Body of pancreas (tissue), 4 donors: ENCODE measurements at regions of chr9 and their contacts with region 1.

Region 1: GRCh38 chr9:78261403-78262001 is 25.6 kb downstream of the CEP78 start:
- DNase-seq: no peak
- ATAC-seq: peak; percentile 50
- H3K4me3 ChIP-seq: no peak overlapping the region
- H3K27ac ChIP-seq: no peak overlapping the region
- H3K4me1 ChIP-seq: peaks cover 17% of the 10 kb centered on the region
- H3K27me3 ChIP-seq: no peaks in the 10 kb centered on the region
- CTCF ChIP-seq: peak; percentile 20 to 74 (median 66)
- POLR2A ChIP-seq: no peak

Region 2: DNA sequence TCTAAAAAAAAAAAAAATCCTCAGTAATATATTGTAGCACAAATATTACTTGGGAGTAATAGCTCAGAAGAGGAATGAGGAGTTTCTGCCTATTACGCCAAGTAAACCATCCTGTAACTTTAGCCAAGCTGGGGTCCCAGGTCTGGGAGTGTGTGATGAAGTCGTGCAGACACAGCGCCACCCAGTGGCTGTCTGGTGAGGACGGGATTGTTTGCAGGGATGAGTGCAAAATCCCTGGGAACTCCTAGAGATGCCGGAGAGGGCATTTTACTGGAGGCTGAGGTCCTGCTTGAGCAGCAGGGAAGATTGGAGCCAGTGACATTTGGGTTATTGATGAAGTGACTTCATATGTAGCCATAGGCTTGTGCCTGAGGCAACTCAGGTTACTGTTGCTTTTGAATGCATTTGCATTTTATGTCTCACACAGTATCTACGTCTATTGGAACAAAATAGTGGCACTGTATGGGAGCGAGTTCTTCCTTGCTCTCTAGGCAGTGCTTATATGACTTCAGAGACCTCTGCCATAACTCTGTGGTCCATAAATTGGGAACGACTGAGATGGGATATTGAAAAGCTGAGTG is 108.2 kb after region 1 on chr9:
- intact Hi-C with region 1: loop called (anchors 10 kb)
- DNase-seq: peak; percentile 71 to 81 (median 76)
- ATAC-seq: peak; percentile 35
- H3K4me3 ChIP-seq: no peak overlapping the region
- H3K27ac ChIP-seq: no peak overlapping the region
- H3K4me1 ChIP-seq: no peaks in the 10 kb centered on the region
- H3K27me3 ChIP-seq: no peaks in the 10 kb centered on the region
- CTCF ChIP-seq: peak; percentile 42 to 82 (median 77)
- POLR2A ChIP-seq: no peak